WTC11 (cell line): ENCODE measurements at regions of chr12 and their contacts with region 1.

Region 1: DNA sequence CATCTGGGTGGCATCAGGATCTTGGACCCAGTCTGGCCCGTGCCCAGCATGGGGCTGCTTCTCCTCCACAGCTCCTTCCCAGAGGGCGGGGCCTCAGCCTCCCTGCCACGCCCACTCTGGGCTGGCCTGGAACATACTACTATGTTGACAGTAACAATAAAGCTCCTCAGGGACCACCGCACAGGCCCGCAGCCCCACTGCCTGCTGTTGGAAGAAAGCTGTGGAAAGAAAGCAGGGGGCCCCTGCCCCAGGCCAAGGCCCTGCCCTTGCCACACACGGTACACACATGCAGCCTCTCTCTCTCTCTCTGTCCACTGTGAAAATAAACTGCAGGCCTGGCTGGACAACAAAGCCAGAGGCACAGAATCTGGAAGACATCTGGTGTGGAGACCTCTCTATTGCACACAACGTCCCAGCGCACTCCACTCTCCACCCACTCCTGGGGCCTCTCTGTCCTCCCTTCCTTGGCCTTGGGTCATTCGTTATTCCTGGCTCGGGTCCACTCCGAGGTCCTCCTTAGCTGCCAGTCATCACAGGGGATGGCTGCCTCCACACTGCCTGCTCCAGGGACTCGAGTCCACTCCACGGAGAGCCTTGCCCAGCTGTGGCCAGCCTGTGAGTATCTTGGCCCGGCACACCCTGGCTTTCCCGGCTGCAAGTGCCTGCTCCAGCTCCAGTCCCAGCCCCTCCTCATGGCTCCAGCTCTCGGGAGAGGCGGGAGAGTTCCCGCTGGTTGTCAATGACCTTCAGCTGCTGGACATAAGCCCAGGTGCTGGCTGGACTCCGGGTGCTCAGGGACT is 11.8 kb upstream of the ENDOU start:
- DNase-seq: peak; percentile 38
- ATAC-seq: peak; percentile 8; the same call in 1 of the 2 replicates
- H3K4me3 Mint-ChIP-seq: no peak overlapping the region
- H3K27ac Mint-ChIP-seq: no peak overlapping the region
- H3K4me1 Mint-ChIP-seq: peaks cover 26% of the 10 kb centered on the region
- H3K27me3 Mint-ChIP-seq: peaks cover 6% of the 10 kb centered on the region; the same call in 1 of the 2 replicates
- CTCF ChIP-seq: no peak

Region 2: DNA sequence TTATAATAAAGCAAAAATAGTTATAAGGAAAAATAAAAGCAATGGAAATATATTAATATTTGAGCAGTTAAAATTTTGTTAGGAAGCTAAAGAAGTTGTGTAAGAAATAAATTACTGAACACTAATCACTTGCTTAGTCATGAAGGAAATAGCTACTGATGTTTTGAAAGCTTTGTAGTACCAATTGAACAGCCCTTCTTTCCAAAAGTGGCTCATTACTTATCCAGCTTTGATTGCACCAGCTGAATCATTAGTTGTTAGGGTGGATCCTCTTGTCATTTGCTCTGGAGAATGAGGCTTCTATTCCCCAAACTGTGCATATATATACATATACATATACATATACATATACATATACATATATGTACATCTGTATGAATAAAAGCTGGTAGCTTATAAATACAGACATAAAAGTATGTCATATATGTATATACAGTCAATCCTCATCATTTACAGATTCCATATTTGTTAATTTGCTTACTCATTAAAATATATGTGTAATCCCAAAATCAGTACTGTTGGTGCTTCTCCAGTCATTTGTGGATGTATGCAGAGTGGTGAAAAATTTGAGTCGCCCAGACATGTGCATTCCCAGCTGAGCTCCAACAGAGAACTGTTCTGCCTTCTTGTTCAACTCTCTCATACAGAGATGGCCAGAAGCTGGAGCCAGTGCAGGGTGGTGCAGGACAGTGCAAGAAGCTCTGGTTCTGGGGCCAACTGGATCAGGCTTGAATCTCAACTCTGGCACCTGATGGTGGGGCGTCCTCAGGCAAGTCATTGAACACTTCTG is 245.4 kb before region 1 on chr12:
- CTCF ChIA-PET with region 1: no interaction called
- POLR2A ChIA-PET with region 1: no interaction called
- DNase-seq: no peak
- ATAC-seq: no peak
- H3K4me3 Mint-ChIP-seq: no peak overlapping the region
- H3K27ac Mint-ChIP-seq: no peak overlapping the region
- H3K4me1 Mint-ChIP-seq: no peaks in the 10 kb centered on the region
- H3K27me3 Mint-ChIP-seq: peaks cover 6% of the 10 kb centered on the region; the same call in 1 of the 2 replicates
- CTCF ChIP-seq: no peak

Region 3: GRCh38 chr12:47715393-47715876 is 21.6 kb before region 1 on chr12:
- CTCF ChIA-PET with region 1: interaction called, 104 read pairs
- POLR2A ChIA-PET with region 1: no interaction called
- DNase-seq: peak; percentile 71
- ATAC-seq: peak; percentile 43
- H3K4me3 Mint-ChIP-seq: no peak overlapping the region
- H3K27ac Mint-ChIP-seq: no peak overlapping the region
- H3K4me1 Mint-ChIP-seq: peaks cover 29% of the 10 kb centered on the region
- H3K27me3 Mint-ChIP-seq: peaks cover 72% of the 10 kb centered on the region
- CTCF ChIP-seq: peak; percentile 72

Region 4: GRCh38 chr12:47758834-47759690 is 22.0 kb after region 1 on chr12 and contains the start of gene RAPGEF3:
- CTCF ChIA-PET with region 1: interaction called, 173 read pairs
- POLR2A ChIA-PET with region 1: interaction called, 3 read pairs
- DNase-seq: peak; percentile 74
- ATAC-seq: peak; percentile 79
- H3K4me3 Mint-ChIP-seq: peak within 1 kb of the TSS; percentile 67
- H3K27ac Mint-ChIP-seq: no peak within 1 kb of the TSS
- H3K4me1 Mint-ChIP-seq: peaks cover 53% of the 10 kb centered on the region
- H3K27me3 Mint-ChIP-seq: no peaks in the 10 kb centered on the region; the same call in 1 of the 2 replicates
- CTCF ChIP-seq: no peak; the same call in 1 of the 2 replicates
- total RNA-seq, gene RAPGEF3: 9.0 to 13.3 TPM (median 9.7 TPM) in 3 replicates

Region 5: GRCh38 chr12:47876440-47876960 is 139.4 kb after region 1 on chr12:
- CTCF ChIA-PET with region 1: no interaction called
- POLR2A ChIA-PET with region 1: no interaction called
- DNase-seq: no peak
- ATAC-seq: no peak
- H3K4me3 Mint-ChIP-seq: no peak overlapping the region
- H3K27ac Mint-ChIP-seq: no peak overlapping the region
- H3K4me1 Mint-ChIP-seq: peaks cover 8% of the 10 kb centered on the region
- H3K27me3 Mint-ChIP-seq: peaks cover 3% of the 10 kb centered on the region
- CTCF ChIP-seq: no peak